Lower lobe of right lung (tissue), 2 donors: ENCODE measurements at regions of chr1 and their contacts with region 1.

Region 1: DNA sequence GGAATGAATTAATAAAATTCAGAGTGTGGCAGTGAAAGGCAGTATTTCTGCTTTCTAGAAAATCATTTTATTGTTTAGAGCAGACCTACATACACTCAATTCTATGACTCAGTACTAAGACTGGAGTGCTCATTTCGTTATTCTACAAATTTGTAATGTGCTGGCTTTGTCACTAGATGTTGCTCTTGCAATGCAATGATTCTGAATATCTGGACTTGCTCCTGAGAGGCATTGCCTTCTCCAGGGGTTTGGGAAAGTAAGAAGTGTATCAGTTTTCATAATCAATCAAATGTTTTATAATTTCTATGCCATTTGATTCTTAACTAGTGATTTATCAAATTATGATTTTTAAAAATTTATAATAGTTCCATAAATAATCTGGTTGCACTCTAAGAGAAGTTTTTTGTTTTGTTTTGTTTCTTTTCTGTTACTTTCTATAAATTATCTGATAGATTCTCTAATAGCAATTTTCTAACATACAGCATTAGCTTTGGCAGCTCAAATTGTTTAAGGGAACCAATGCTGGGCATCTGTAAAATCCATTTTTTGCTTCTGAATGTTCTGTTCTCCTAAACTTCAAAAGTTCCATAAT is 280.5 kb upstream of the SGIP1 start:
- DNase-seq: no peak
- ATAC-seq: peak; percentile 84 to 93
- H3K4me3 ChIP-seq: no peak overlapping the region
- H3K27ac ChIP-seq: no peak overlapping the region
- H3K4me1 ChIP-seq: peaks cover 15% of the 10 kb centered on the region
- H3K27me3 ChIP-seq: no peaks in the 10 kb centered on the region
- CTCF ChIP-seq: peak; percentile 77

Region 2: GRCh38 chr1:66446261-66447001 is 193.0 kb after region 1 on chr1:
- intact Hi-C with region 1: loop called (anchors 2 kb)
- DNase-seq: no peak
- ATAC-seq: peak; percentile 80 to 87
- H3K4me3 ChIP-seq: no peak overlapping the region
- H3K27ac ChIP-seq: peak overlapping the region; percentile 73
- H3K4me1 ChIP-seq: peaks cover 27% of the 10 kb centered on the region
- H3K27me3 ChIP-seq: no peaks in the 10 kb centered on the region
- CTCF ChIP-seq: peak; percentile 89